ENCODE measurements at regions of chr13 and their contacts with region 1.

Region 1: GRCh38 chr13:95296326-95296925 is 4.8 kb downstream of the ABCC4 start:
- DNase-seq: no peak
- H3K4me3 ChIP-seq: no peak overlapping the region
- H3K27ac ChIP-seq: no peak overlapping the region
- H3K4me1 ChIP-seq: peaks cover 0 to 17% (median 13%) of the 10 kb centered on the region in 4 donors
- H3K27me3 ChIP-seq: no peaks in the 10 kb centered on the region
- CTCF ChIP-seq: peak; percentile 53 to 67 (median 58)
- EP300 ChIP-seq: no peak
- POLR2A ChIP-seq: no peak

Region 2: GRCh38 chr13:95378603-95379002 is 82.2 kb after region 1 on chr13:
- intact Hi-C with region 1: loop called (anchors 5 kb)
- DNase-seq: no peak
- H3K4me3 ChIP-seq: no peak overlapping the region
- H3K27ac ChIP-seq: no peak overlapping the region
- H3K4me1 ChIP-seq: peaks cover 6 to 15% (median 9%) of the 10 kb centered on the region in 4 donors
- H3K27me3 ChIP-seq: no peaks in the 10 kb centered on the region
- CTCF ChIP-seq: no peak
- EP300 ChIP-seq: no peak
- POLR2A ChIP-seq: no peak

Region 3: DNA sequence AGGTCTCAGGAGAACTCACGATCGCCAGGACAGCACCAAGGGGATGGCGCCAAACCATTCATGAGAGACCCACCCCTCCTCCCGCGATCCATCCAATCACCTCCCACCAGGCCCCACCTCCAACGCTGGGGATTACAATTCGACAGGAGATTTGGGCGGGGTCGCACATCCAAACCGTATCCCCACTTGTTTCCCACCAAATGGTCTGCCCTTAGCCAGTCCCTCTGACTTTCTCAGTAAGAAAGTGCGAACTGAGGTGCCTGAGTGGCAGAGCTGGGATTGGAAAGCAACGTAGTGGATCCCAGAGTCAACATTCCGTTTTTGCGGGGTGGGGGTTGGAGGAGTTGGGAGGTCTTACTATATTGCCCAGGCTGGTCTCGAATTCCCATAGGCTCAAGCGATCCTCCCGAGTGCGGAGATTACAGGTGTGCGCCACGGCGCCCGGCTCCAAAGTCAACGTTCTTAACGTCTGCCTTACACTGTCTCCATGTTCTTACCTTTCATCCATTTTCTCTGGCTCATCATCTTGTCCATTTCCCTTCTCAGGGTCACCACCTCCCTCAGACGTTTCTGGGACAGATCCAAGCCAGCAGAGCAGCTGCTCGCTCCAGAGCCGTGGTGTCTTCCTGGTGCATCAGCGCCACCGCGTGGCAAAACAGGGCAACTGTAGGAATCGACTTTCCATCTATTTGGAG is 107.5 kb after region 1 on chr13:
- intact Hi-C with region 1: loop called (anchors 2 kb)
- DNase-seq: no peak
- H3K4me3 ChIP-seq: peak overlapping the region; percentile 39 to 46 (median 42)
- H3K27ac ChIP-seq: no peak overlapping the region
- H3K4me1 ChIP-seq: peaks cover 5 to 11% (median 10%) of the 10 kb centered on the region in 4 donors
- H3K27me3 ChIP-seq: peaks cover 0 to 9% (median 0%) of the 10 kb centered on the region in 4 donors
- CTCF ChIP-seq: peak; percentile 91 to 94 (median 93)
- EP300 ChIP-seq: no peak
- POLR2A ChIP-seq: no peak

Region 4: DNA sequence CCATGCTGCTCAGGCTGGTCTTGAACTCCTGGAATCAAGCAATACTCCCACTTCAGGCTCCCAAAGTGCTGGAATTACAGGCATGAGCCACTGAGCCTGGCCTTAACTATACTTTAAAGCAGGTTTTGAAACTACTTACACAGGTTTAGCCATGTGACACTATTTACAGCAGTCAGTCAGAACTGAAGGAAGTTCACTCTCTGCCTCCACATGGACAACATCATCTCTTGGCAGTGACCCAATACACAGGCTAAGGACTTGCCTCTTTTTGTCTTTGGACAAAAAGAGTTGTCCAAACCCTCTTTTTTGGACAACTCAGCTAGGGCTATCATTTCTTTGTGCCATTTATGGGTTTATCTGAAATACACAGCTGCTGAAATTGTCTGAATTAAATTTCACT is 167.1 kb after region 1 on chr13:
- intact Hi-C with region 1: no loop called
- DNase-seq: no peak
- H3K4me3 ChIP-seq: no peak overlapping the region
- H3K27ac ChIP-seq: no peak overlapping the region
- H3K4me1 ChIP-seq: no peaks in the 10 kb centered on the region
- H3K27me3 ChIP-seq: no peaks in the 10 kb centered on the region
- CTCF ChIP-seq: no peak
- EP300 ChIP-seq: no peak
- POLR2A ChIP-seq: no peak

Measured in esophagus muscularis mucosa (tissue), 4 donors.